ENCODE measurements at regions of chr12 and their contacts with region 1.

Region 1: DNA sequence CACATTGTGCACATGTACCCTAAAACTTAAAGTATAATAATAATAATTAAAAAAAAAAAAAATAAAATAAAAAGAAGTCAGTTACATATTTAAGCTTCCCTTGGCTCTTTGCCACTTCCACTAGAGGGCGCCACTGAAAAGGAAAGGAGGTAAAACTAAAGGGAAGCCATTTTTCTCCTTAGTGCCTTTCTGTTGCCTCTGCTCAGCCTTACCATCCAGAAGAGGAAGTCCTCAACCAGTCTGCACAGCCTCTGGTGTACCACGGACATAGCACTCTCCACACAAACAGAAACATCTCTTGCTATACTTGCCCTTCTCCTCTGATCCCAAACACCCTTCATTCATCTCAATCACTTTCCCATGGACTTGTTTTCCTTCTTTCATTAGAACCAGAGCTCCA is 169.0 kb upstream of the EEA1 start:
- DNase-seq: peak; percentile 48 to 82
- ATAC-seq: peak; percentile 75

Region 2: GRCh38 chr12:93378373-93379325 is 280.6 kb after region 1 on chr12:
- intact Hi-C with region 1: loop called in 1 of 2 experiments (anchors 10 kb)
- DNase-seq: peak in 1 of 2 donors; percentile 60
- ATAC-seq: peak; percentile 11